ENCODE measurements at regions of chr5 and their contacts with region 1.

Region 1: GRCh38 chr5:66306105-66306843 is 162.2 kb downstream of the SREK1 start:
- DNase-seq: peak in 1 of 2 donors; percentile 29
- H3K4me3 ChIP-seq: no peak overlapping the region
- CTCF ChIP-seq: peak in 1 of 3 donors; percentile 15
- POLR2A ChIP-seq: no peak

Region 2: DNA sequence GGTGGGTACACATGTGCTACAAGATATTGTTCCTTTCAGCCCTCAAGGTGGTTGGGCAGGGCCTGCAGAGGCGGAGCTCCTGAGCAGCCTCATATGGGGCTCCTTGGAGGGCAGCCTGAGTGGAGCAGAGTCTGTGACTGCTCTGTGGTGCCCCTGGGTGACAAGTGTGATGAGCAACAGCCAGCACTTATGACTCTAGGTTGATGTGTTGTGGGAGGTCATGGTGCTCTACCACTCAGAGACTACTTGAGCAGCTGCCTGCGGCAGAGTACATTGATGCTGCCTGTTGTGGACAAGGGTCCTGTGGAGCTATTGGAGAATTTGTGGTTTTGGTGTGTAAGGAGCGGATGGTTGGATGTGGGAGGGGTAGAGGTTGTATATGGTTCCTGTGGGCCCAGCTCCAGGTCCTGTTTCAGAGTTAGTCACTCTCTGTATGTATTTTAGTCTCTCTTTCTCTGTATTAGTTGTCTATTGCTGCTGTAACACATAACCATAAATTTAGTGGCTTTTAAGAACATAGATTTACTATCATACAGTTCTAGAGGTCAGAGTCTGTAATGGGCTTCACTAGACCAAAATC is 20.8 kb before region 1 on chr5:
- intact Hi-C with region 1: no loop called
- DNase-seq: no peak
- H3K4me3 ChIP-seq: no peak overlapping the region
- CTCF ChIP-seq: no peak
- POLR2A ChIP-seq: no peak

Region 3: DNA sequence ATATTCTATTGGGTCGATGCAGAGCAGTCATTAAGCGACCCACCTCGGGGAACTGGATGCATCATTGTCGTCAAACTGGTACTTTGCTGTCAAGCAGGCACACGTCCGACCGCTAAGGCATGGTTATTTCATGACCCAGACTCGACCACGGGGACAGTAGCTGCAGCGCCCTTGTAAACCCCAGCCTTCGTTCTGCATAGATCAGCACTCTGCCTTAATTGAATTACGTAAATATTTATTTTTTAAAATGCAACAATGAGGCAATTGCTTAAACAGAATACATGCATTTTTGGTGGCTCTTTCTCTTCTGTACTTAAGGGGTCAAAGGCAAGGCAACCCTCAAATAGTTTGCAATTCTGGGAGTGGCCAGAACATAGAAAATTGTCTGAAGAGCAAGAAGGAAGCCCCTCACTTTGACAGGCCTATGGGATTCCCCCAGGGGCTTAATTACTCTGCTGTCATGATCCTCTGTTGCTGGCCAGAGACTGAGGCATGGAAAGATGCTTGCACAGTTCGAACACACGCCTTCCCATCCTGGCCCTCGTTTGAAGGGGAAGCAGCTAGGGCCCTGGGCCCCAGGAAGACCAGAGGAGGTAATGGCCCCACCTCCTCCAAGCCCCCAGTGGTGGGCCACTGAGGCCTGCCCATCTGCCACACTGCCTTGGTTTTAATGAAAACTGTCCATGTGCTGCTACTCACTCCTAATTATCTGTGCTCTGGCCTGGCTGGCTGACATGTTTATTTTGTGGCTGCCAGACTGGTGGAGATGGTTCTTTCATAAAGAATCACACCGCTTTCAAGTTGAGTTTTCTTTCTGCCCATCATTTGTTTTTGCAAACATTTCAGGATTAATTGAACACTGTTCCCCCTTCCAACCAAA is 120.2 kb after region 1 on chr5:
- intact Hi-C with region 1: no loop called
- DNase-seq: no peak
- H3K4me3 ChIP-seq: no peak overlapping the region
- CTCF ChIP-seq: no peak
- POLR2A ChIP-seq: no peak

Region 4: GRCh38 chr5:66757188-66757833 is 451.0 kb after region 1 on chr5:
- intact Hi-C with region 1: loop called (anchors 10 kb)
- DNase-seq: peak in 1 of 2 donors; percentile 35
- H3K4me3 ChIP-seq: no peak overlapping the region
- CTCF ChIP-seq: no peak
- POLR2A ChIP-seq: no peak

Measured in lower leg skin (tissue), 4 donors.